ENCODE measurements at regions of chr2 and their contacts with region 1.

Region 1: DNA sequence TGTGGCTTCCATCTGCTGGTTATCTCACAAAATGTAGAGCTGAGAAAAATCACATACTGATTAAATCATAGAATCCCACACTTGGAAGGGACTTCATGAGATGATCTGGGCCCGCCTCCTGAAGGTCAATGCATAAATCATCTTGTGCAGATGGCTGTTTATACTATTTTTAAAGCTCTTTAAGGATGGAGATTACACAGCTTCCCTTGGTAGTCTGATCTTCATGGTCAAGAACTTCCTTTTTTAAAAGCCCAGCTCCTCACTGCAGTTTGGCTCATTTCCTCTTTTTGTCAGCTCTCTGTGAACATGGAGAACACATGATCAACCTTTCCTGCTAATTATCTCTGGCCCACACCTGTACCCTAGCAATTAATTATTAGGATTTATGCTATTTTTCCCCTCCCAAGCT is 25.9 kb downstream of the GCG start:
- DNase-seq: no peak
- H3K4me3 ChIP-seq: no peak overlapping the region
- H3K27ac ChIP-seq: no peak overlapping the region
- H3K4me1 ChIP-seq: no peaks in the 10 kb centered on the region
- H3K27me3 ChIP-seq: no peaks in the 10 kb centered on the region
- CTCF ChIP-seq: no peak
- POLR2A ChIP-seq: no peak

Region 2: GRCh38 chr2:161975062-161975812 is 150.9 kb before region 1 on chr2:
- intact Hi-C with region 1: no loop called
- DNase-seq: no peak
- H3K4me3 ChIP-seq: no peak overlapping the region
- H3K27ac ChIP-seq: no peak overlapping the region
- H3K4me1 ChIP-seq: no peaks in the 10 kb centered on the region
- H3K27me3 ChIP-seq: no peaks in the 10 kb centered on the region
- CTCF ChIP-seq: no peak
- POLR2A ChIP-seq: no peak

Region 3: DNA sequence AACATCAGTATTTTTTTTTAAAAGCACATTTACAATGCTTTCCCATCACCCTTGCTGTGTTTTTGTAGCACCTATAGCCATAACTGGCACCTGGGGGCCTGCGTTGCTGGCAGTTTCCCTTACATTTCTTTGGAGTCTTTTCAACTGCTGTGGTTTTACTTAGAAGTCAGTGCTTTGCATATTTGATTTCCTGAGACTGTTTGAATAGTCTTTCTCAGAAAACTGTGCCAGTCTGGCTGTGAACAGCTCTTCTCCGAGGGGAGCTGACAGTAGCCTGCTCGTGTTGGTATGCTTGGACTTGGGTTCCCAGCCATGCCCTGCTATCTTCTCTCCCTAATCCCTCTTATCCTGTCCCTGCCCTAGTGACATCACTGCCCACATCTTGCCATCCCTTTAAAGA is 133.6 kb before region 1 on chr2:
- intact Hi-C with region 1: no loop called
- DNase-seq: no peak
- H3K4me3 ChIP-seq: no peak overlapping the region
- H3K27ac ChIP-seq: peak overlapping the region in 1 of 4 donors; percentile 7
- H3K4me1 ChIP-seq: no peaks in the 10 kb centered on the region
- H3K27me3 ChIP-seq: no peaks in the 10 kb centered on the region
- CTCF ChIP-seq: no peak
- POLR2A ChIP-seq: no peak

Region 4: GRCh38 chr2:162002623-162003240 is 123.4 kb before region 1 on chr2:
- intact Hi-C with region 1: loop called (anchors 5 kb)
- DNase-seq: no peak
- H3K4me3 ChIP-seq: no peak overlapping the region
- H3K27ac ChIP-seq: no peak overlapping the region
- H3K4me1 ChIP-seq: no peaks in the 10 kb centered on the region
- H3K27me3 ChIP-seq: no peaks in the 10 kb centered on the region
- CTCF ChIP-seq: no peak
- POLR2A ChIP-seq: no peak